ENCODE measurements at regions of chr19 and their contacts with region 1.

Region 1: GRCh38 chr19:17405250-17406038 is at the start of gene BST2:
- DNase-seq: peak; percentile 74 to 80
- H3K4me3 ChIP-seq: peak within 1 kb of the TSS; percentile 42
- H3K4me3 Mint-ChIP-seq: peak within 1 kb of the TSS; percentile 76
- H3K27ac Mint-ChIP-seq: peak within 1 kb of the TSS; percentile 10
- H3K4me1 ChIP-seq: peaks cover 13% of the 10 kb centered on the region
- H3K4me1 Mint-ChIP-seq: peaks cover 10% of the 10 kb centered on the region
- H3K27me3 ChIP-seq: no peaks in the 10 kb centered on the region
- H3K27me3 Mint-ChIP-seq: no peaks in the 10 kb centered on the region
- CTCF ChIP-seq: no peak
- total RNA-seq, gene BST2: 94.3 and 98.4 TPM in 2 replicates

Region 2: GRCh38 chr19:17419621-17420466 is 14.4 kb after region 1 on chr19 and contains the start of gene MVB12A:
- CTCF ChIA-PET with region 1: interaction called, 6 read pairs
- POLR2A ChIA-PET with region 1: interaction called, 15 read pairs
- intact Hi-C with region 1: no loop called
- DNase-seq: peak; percentile 95 to 97
- H3K4me3 ChIP-seq: peak within 1 kb of the TSS; percentile 85
- H3K4me3 Mint-ChIP-seq: peak within 1 kb of the TSS; percentile 85
- H3K27ac Mint-ChIP-seq: peak within 1 kb of the TSS; percentile 89
- H3K4me1 ChIP-seq: peaks cover 8% of the 10 kb centered on the region; the same call in 1 of the 2 replicates
- H3K4me1 Mint-ChIP-seq: peaks cover 11% of the 10 kb centered on the region
- H3K27me3 ChIP-seq: no peaks in the 10 kb centered on the region
- H3K27me3 Mint-ChIP-seq: no peaks in the 10 kb centered on the region
- CTCF ChIP-seq: no peak
- total RNA-seq, gene MVB12A: 36.7 and 37.6 TPM in 2 replicates

Measured in Caco-2 (cell line).